Naive thymus-derived CD8-positive, alpha-beta T cell (primary cell): ENCODE measurements at regions of chr2 and their contacts with region 1.

Region 1: GRCh38 chr2:68751397-68752339 is 17.1 kb downstream of the ARHGAP25 start:
- DNase-seq: peak; percentile 78 to 94 (median 87)
- ATAC-seq: peak; percentile 95 to 96
- H3K4me3 Mint-ChIP-seq: peak overlapping the region; percentile 23 to 75 (median 62)
- H3K27ac Mint-ChIP-seq: peak overlapping the region; percentile 86 to 97 (median 90)
- H3K4me1 Mint-ChIP-seq: peaks cover 53 to 87% (median 84%) of the 10 kb centered on the region in 4 donors
- H3K27me3 Mint-ChIP-seq: no peaks in the 10 kb centered on the region

Region 2: GRCh38 chr2:68362069-68362468 is 389.6 kb before region 1 on chr2:
- POLR2A ChIA-PET with region 1: no interaction called
- DNase-seq: peak; percentile 59 to 87 (median 71)
- ATAC-seq: peak; percentile 94 to 96
- H3K4me3 Mint-ChIP-seq: peak overlapping the region; percentile 44 to 86 (median 79)
- H3K27ac Mint-ChIP-seq: peak overlapping the region in 7 of 10 donors; percentile 0 to 94 (median 1)
- H3K4me1 Mint-ChIP-seq: peaks cover 2 to 43% (median 10%) of the 10 kb centered on the region in 4 donors
- H3K27me3 Mint-ChIP-seq: peaks cover 0 to 2% (median 0%) of the 10 kb centered on the region in 5 donors

Region 3: DNA sequence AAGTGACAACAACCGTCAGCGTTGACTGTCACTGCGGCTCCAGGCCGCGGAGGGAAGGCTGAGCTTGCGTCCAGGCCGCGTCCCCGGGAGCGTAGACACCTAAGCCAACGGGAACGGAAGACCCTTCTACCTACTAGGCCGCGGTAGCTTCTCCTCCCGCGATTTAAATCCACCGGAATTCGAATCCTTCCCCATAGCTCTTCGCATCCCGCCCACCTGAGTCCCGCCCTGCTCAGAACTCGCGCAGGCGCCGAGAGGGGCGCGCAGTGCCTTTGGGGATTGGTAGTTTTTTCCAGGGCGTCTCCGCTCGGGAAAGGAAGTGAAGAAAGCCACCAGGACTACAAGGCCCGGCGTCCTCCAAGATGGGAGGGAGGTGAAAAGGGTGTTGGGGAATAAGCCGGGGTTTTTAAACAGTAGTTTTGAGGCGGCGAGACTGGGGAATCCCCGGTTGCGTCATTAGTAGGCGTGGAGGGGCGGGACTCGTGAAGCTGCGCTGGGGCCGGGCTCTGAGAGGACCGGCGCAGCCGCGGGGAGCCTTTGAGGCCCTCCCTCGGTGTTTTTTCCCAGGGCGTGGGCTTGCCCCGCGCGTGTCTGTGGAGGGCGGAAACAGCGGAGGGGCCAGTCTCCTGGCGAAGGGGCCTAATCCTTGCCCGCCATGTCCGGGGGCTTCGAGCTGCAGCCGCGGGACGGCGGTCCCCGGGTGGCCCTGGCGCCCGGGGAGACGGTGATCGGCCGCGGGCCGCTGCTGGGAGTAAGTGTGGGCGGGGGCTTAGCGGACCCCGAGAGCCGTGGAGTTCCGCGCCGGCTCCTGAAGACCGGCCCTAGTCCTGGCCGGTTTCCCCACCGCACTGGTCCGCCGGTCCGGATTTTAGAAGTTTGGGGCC is 284.3 kb before region 1 on chr2 and contains the starts of genes APLF and FBXO48:
- POLR2A ChIA-PET with region 1: interaction called, 15 read pairs
- DNase-seq: peak; percentile 90 to 99 (median 98)
- ATAC-seq: peak; percentile 90 to 92
- H3K4me3 Mint-ChIP-seq: peak within 1 kb of the TSS; percentile 87 to 98 (median 96)
- H3K27ac Mint-ChIP-seq: peak within 1 kb of the TSS; percentile 85 to 98 (median 94)
- H3K4me1 Mint-ChIP-seq: peaks cover 12 to 53% (median 41%) of the 10 kb centered on the region in 4 donors
- H3K27me3 Mint-ChIP-seq: no peaks in the 10 kb centered on the region
- polyA plus RNA-seq, gene APLF: 1.4 to 1.6 (median 1.6) TPM
- polyA plus RNA-seq, gene FBXO48: 0.19 to 0.69 (median 0.36) TPM

Region 4: DNA sequence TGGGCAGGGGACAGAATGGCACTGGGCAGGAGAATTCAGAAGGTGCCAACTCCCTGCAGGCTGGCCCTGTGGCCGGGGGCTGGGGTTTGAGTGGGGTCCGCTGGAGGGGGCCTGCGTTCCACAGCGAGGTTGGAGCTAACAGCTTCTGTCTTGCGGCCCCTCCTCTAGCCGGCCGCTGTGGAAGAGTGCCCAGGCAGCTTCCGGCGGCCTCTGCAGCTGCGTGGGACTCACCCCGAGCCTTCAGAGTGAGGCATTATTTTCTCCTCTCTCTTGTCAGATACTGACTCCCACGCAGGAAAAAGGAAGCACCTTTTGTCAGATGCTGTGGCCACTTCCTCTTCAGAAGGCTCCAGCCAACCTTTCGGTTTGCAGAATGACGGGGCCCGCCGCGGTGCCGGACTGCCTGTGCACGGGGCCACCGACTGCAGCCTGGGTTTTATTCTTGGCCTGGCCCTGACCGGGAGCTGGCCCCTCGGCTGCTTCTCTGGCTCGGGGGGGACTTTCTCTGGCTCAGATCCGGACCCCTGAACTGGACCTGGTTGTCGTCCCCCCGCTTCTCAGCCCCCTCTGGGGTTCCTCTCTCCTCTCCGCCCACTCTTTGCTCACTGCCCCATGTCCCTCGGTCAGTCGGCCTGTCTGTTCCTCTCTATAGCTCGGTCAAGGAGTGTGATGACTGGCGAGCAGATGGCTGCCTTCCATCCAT is 23.1 kb after region 1 on chr2:
- POLR2A ChIA-PET with region 1: interaction called, 281 read pairs
- DNase-seq: peak in 9 of 10 donors; percentile 33 to 71 (median 50)
- ATAC-seq: peak; percentile 62 to 69
- H3K4me3 Mint-ChIP-seq: peak overlapping the region; percentile 86 to 94 (median 92)
- H3K27ac Mint-ChIP-seq: peak overlapping the region; percentile 95 to 100 (median 99)
- H3K4me1 Mint-ChIP-seq: peaks cover 65 to 91% (median 87%) of the 10 kb centered on the region in 4 donors
- H3K27me3 Mint-ChIP-seq: no peaks in the 10 kb centered on the region

Region 5: GRCh38 chr2:68811364-68811763 is 59.7 kb after region 1 on chr2:
- POLR2A ChIA-PET with region 1: interaction called, 10 read pairs
- DNase-seq: no peak
- ATAC-seq: no peak
- H3K4me3 Mint-ChIP-seq: no peak overlapping the region
- H3K27ac Mint-ChIP-seq: peak overlapping the region in 9 of 10 donors; percentile 20 to 90 (median 81)
- H3K4me1 Mint-ChIP-seq: peaks cover 20 to 55% (median 48%) of the 10 kb centered on the region in 4 donors
- H3K27me3 Mint-ChIP-seq: no peaks in the 10 kb centered on the region

Region 6: GRCh38 chr2:68925295-68925896 is 173.7 kb after region 1 on chr2:
- POLR2A ChIA-PET with region 1: interaction called, 10 read pairs
- DNase-seq: peak in 9 of 10 donors; percentile 35 to 70 (median 55)
- ATAC-seq: peak; percentile 67 to 78
- H3K4me3 Mint-ChIP-seq: no peak overlapping the region
- H3K27ac Mint-ChIP-seq: no peak overlapping the region
- H3K4me1 Mint-ChIP-seq: peaks cover 0 to 6% (median 0%) of the 10 kb centered on the region in 4 donors
- H3K27me3 Mint-ChIP-seq: peaks cover 0 to 7% (median 1%) of the 10 kb centered on the region in 5 donors